Mammary epithelial cell (primary cell): ENCODE measurements at regions of chr9 and their contacts with region 1.

Region 1: GRCh38 chr9:82354279-82354659 is 365.7 kb downstream of the SPATA31D1 start:
- DNase-seq: peak; percentile 97
- H3K4me3 ChIP-seq: no peak overlapping the region
- H3K27ac ChIP-seq: peak overlapping the region; percentile 83
- H3K4me1 ChIP-seq: peaks cover 37% of the 10 kb centered on the region
- H3K27me3 ChIP-seq: no peaks in the 10 kb centered on the region
- CTCF ChIP-seq: no peak

Region 2: DNA sequence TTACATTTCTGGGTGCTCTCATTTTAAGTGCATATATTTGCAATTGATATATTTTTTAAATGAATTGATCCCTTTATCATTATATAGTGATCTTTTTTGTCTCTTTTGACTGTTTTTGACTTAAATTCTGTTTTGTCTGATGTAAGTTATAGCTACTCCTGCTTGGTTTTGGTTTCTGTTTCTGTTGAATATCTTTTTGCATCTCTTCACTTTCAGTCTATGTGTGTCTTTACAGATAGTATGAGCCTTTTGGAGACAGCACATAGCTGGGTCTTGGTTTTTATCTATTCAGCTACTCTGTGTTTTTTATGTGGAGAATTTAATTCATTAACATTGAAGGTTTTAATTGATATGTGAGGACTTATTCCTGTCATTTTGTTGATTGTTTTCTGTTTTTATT is 54.4 kb before region 1 on chr9:
- CTCF ChIA-PET with region 1: no interaction called
- dilution Hi-C with region 1: no loop called
- in situ Hi-C with region 1: no loop called
- intact Hi-C with region 1: no loop called
- DNase-seq: no peak
- H3K4me3 ChIP-seq: no peak overlapping the region
- H3K27ac ChIP-seq: no peak overlapping the region
- H3K4me1 ChIP-seq: no peaks in the 10 kb centered on the region
- H3K27me3 ChIP-seq: no peaks in the 10 kb centered on the region
- CTCF ChIP-seq: no peak

Region 3: DNA sequence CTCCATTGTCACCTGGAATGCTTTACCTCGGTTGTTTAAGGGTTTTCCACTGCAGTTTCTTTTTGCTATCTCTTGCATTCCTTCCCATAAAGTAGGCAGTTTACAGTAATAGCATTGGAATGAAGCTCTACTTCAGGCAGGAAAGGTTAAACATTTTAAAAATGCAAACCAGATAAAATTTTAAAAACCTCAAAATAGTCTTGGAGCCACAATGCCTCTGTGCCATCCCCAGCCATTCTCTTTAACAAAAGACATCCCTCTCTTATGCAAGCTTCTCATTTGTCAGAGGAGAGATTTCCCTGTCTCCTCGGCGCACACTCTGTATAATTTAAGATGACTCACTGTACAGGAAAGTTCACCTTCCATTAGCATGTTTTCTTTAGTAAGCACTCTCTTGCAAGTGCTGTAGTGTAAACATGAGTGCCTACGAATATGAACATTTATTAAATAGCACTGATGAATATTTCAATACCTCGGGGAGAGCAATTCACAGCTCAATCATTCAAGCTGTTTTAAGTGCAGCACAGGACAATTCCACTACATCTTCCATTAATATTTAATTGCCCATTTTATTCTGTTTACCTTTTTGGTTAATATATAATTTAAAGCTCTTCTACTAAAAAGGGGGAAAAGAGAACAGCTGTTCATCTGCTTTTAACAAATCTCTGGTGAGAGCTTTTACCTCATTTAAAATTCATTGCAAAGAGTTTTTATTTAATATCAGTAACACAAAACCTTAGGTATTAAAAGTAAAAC is 22.1 kb before region 1 on chr9:
- CTCF ChIA-PET with region 1: no interaction called
- dilution Hi-C with region 1: no loop called
- in situ Hi-C with region 1: no loop called
- intact Hi-C with region 1: loop called (anchors 1 kb)
- DNase-seq: peak; percentile 87
- H3K4me3 ChIP-seq: peak overlapping the region in 1 of 3 experiments; percentile 16
- H3K27ac ChIP-seq: peak overlapping the region; percentile 12
- H3K4me1 ChIP-seq: peaks cover 35% of the 10 kb centered on the region
- H3K27me3 ChIP-seq: no peaks in the 10 kb centered on the region
- CTCF ChIP-seq: no peak

Region 4: DNA sequence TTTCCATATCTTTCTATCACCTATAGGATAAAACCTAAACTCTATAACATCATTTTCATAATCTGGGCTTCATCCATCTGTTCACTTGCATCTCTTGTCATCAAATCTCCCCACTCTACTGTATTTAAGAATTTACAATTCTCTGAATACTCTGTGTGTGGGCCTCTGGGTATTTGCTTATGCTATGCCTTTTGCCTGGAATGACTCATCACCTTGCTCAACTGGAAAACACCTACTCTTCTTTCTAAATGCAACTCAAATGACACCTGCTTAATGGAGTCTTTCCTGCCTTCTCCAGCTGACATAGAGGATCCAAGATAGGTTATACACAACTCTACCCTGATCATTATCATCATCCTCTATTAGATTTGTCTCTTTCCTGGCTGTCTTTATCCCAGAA is 56.0 kb after region 1 on chr9:
- CTCF ChIA-PET with region 1: no interaction called
- dilution Hi-C with region 1: no loop called
- in situ Hi-C with region 1: no loop called
- intact Hi-C with region 1: loop called (anchors 10 kb)
- DNase-seq: peak; percentile 81
- H3K4me3 ChIP-seq: no peak overlapping the region
- H3K27ac ChIP-seq: no peak overlapping the region
- H3K4me1 ChIP-seq: peaks cover 25% of the 10 kb centered on the region
- H3K27me3 ChIP-seq: no peaks in the 10 kb centered on the region
- CTCF ChIP-seq: no peak